ENCODE measurements at regions of chr1 and their contacts with region 1.

Region 1: GRCh38 chr1:1122078-1122811 is 6.4 kb upstream of the C1orf159 start:
- DNase-seq: peak; percentile 92
- ATAC-seq: peak; percentile 89
- H3K4me3 ChIP-seq: peak overlapping the region; percentile 72
- H3K27ac ChIP-seq: no peak overlapping the region
- H3K4me1 ChIP-seq: peaks cover 25% of the 10 kb centered on the region
- H3K27me3 ChIP-seq: no peaks in the 10 kb centered on the region
- CTCF ChIP-seq: peak; percentile 98

Region 2: DNA sequence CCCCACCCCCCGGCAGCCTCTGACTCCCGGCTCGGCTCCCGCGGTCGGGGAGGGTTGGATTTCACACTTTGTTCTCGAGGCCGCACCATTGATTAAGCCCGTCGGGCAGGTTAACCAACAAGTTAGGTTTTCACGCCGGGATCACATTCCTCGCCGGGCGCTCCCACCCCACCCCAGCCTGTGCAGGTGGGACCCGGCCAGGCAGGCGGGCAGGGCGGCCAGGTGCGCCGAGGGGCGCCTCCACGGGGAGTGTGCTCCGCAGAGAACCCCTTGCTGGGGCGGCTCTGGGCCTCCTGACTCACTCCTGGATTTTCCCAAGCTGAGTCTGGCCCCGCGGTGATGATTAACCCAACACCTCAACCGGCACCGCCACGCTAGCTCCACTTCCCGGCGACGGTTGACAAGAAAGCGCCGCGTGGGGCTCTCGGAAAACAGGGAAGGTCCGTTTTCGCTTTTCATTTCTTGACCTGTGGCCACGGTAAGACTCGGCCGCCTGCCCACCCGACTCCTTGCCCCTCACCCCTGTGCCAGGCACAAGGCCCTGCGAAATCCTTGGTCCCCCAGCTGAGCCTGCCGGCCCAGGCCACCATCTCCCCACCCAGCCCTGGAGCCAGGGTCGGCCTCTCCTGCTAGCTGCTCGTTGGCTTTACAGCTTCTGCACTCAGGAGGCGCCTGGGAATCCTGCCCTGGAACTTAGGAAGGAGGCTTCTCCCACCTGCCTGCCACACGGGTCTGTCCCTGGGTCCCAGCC is 42.6 kb after region 1 on chr1:
- CTCF ChIA-PET with region 1: interaction called, 16 read pairs
- POLR2A ChIA-PET with region 1: no interaction called
- intact Hi-C with region 1: loop called (anchors 2 kb)
- DNase-seq: peak; percentile 82
- ATAC-seq: peak; percentile 34
- H3K4me3 ChIP-seq: peak overlapping the region; percentile 90
- H3K27ac ChIP-seq: peak overlapping the region; percentile 73
- H3K4me1 ChIP-seq: peaks cover 17% of the 10 kb centered on the region
- H3K27me3 ChIP-seq: no peaks in the 10 kb centered on the region
- CTCF ChIP-seq: no peak

Region 3: GRCh38 chr1:1231400-1232223 is 109.4 kb after region 1 on chr1 and contains the start of gene SDF4:
- CTCF ChIA-PET with region 1: interaction called, 17 read pairs
- POLR2A ChIA-PET with region 1: no interaction called
- intact Hi-C with region 1: loop called (anchors 1 kb)
- DNase-seq: peak; percentile 99
- ATAC-seq: peak; percentile 84
- H3K4me3 ChIP-seq: peak within 1 kb of the TSS; percentile 81
- H3K27ac ChIP-seq: peak within 1 kb of the TSS; percentile 47
- H3K4me1 ChIP-seq: peaks cover 36% of the 10 kb centered on the region
- H3K27me3 ChIP-seq: no peaks in the 10 kb centered on the region
- CTCF ChIP-seq: no peak
- total RNA-seq, gene SDF4: 254 and 317 TPM in 2 replicates

Region 4: GRCh38 chr1:1264868-1265272 is 142.6 kb after region 1 on chr1:
- CTCF ChIA-PET with region 1: interaction called, 3 read pairs
- POLR2A ChIA-PET with region 1: no interaction called
- intact Hi-C with region 1: loop called (anchors 1 kb)
- DNase-seq: peak; percentile 100
- ATAC-seq: peak; percentile 96
- H3K4me3 ChIP-seq: no peak overlapping the region
- H3K27ac ChIP-seq: peak overlapping the region; percentile 92
- H3K4me1 ChIP-seq: peaks cover 23% of the 10 kb centered on the region
- H3K27me3 ChIP-seq: no peaks in the 10 kb centered on the region
- CTCF ChIP-seq: peak; percentile 94